IMR-90 (cell line): ENCODE measurements at regions of chrX and their contacts with region 1.

Region 1: GRCh38 chrX:13646154-13646549 is 6.8 kb upstream of the TCEANC start:
- DNase-seq: peak; percentile 65
- ATAC-seq: peak; percentile 82
- H3K4me3 ChIP-seq: no peak overlapping the region
- H3K27ac ChIP-seq: no peak overlapping the region
- H3K4me1 ChIP-seq: peaks cover 6% of the 10 kb centered on the region; the same call in 1 of the 2 replicates
- H3K27me3 ChIP-seq: no peaks in the 10 kb centered on the region
- CTCF ChIP-seq: peak; percentile 68
- POLR2A ChIP-seq: no peak
- RAD21 ChIP-seq: peak; percentile 66

Region 2: GRCh38 chrX:12814420-12814819 is 831.7 kb before region 1 on chrX:
- CTCF ChIA-PET with region 1: no interaction called
- POLR2A ChIA-PET with region 1: no interaction called
- dilution Hi-C with region 1: no loop called
- in situ Hi-C with region 1: no loop called
- intact Hi-C with region 1: loop called (anchors 10 kb)
- DNase-seq: peak; percentile 62
- ATAC-seq: peak; percentile 87
- H3K4me3 ChIP-seq: no peak overlapping the region
- H3K27ac ChIP-seq: no peak overlapping the region
- H3K4me1 ChIP-seq: no peaks in the 10 kb centered on the region
- H3K27me3 ChIP-seq: no peaks in the 10 kb centered on the region
- CTCF ChIP-seq: peak; percentile 60
- POLR2A ChIP-seq: no peak
- RAD21 ChIP-seq: peak; percentile 71

Region 3: DNA sequence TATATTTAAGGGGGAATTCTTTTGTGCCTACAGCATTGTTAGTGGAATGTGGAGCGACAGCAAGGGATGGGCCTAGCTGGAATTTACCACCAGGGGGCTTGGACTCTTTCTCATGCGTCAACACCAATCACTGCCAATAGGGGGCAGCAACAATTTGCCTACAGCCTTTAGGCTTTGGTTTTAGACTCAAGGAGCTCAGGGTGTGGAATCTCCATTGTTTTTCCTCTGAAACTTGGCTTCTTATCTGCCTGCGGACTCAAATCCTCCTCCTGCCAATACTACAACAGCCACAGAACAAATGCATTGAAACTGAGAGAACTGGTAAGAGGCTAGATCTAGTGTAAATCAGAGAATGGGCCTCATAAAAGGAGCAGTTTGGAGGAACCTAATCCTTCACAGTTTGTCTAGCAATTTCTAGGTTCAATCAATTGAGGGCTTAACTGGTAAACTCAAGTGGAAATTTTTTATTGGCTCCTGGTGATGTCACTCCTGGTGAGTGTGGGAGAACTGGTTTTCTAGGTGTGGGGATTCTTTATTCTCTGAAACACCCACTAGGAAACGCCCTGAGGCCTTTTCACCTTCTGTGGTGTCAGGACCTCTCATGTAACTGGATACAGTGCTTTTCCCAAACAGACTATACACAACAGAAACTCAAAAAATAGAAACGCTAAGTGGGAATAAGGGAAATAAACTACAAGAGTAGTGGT is 699.2 kb before region 1 on chrX:
- CTCF ChIA-PET with region 1: no interaction called
- POLR2A ChIA-PET with region 1: no interaction called
- dilution Hi-C with region 1: no loop called
- in situ Hi-C with region 1: loop called (anchors 10 kb)
- intact Hi-C with region 1: loop called (anchors 10 kb)
- DNase-seq: peak; percentile 82
- ATAC-seq: peak; percentile 89
- H3K4me3 ChIP-seq: no peak overlapping the region
- H3K27ac ChIP-seq: peak overlapping the region; percentile 53; the same call in 1 of the 2 replicates
- H3K4me1 ChIP-seq: peaks cover 14% of the 10 kb centered on the region
- H3K27me3 ChIP-seq: no peaks in the 10 kb centered on the region
- CTCF ChIP-seq: peak; percentile 100
- POLR2A ChIP-seq: no peak
- RAD21 ChIP-seq: peak; percentile 90

Region 4: GRCh38 chrX:13506574-13506973 is 139.6 kb before region 1 on chrX:
- CTCF ChIA-PET with region 1: interaction called, 24 read pairs
- POLR2A ChIA-PET with region 1: no interaction called
- dilution Hi-C with region 1: no loop called
- in situ Hi-C with region 1: loop called (anchors 25 kb)
- intact Hi-C with region 1: loop called (anchors 1 kb)
- DNase-seq: peak; percentile 61
- ATAC-seq: 0 out of 2 replicates have a peak, but pooled peaks have one; percentile 48
- H3K4me3 ChIP-seq: no peak overlapping the region
- H3K27ac ChIP-seq: no peak overlapping the region
- H3K4me1 ChIP-seq: no peaks in the 10 kb centered on the region
- H3K27me3 ChIP-seq: peaks cover 9% of the 10 kb centered on the region
- CTCF ChIP-seq: peak; percentile 94
- POLR2A ChIP-seq: no peak
- RAD21 ChIP-seq: peak; percentile 95

Region 5: GRCh38 chrX:13520936-13521335 is 125.2 kb before region 1 on chrX:
- CTCF ChIA-PET with region 1: no interaction called
- POLR2A ChIA-PET with region 1: no interaction called
- dilution Hi-C with region 1: no loop called
- in situ Hi-C with region 1: loop called (anchors 25 kb)
- intact Hi-C with region 1: loop called (anchors 5 kb)
- DNase-seq: no peak
- ATAC-seq: no peak
- H3K4me3 ChIP-seq: no peak overlapping the region
- H3K27ac ChIP-seq: no peak overlapping the region
- H3K4me1 ChIP-seq: no peaks in the 10 kb centered on the region
- H3K27me3 ChIP-seq: peaks cover 5% of the 10 kb centered on the region
- CTCF ChIP-seq: no peak
- POLR2A ChIP-seq: no peak
- RAD21 ChIP-seq: no peak